Caco-2 (cell line): ENCODE measurements at regions of chr11 and their contacts with region 1.

Region 1: GRCh38 chr11:73141848-73142286 is 251 bp downstream of the FCHSD2 start:
- DNase-seq: peak; percentile 86 to 89
- H3K4me3 ChIP-seq: peak overlapping the region; percentile 96
- H3K4me3 Mint-ChIP-seq: peak overlapping the region; percentile 96
- H3K27ac Mint-ChIP-seq: peak overlapping the region; percentile 93
- H3K4me1 ChIP-seq: peaks cover 28% of the 10 kb centered on the region
- H3K4me1 Mint-ChIP-seq: peaks cover 24% of the 10 kb centered on the region
- H3K27me3 ChIP-seq: no peaks in the 10 kb centered on the region
- H3K27me3 Mint-ChIP-seq: no peaks in the 10 kb centered on the region
- CTCF ChIP-seq: peak in 1 of 2 experiments; percentile 20

Region 2: DNA sequence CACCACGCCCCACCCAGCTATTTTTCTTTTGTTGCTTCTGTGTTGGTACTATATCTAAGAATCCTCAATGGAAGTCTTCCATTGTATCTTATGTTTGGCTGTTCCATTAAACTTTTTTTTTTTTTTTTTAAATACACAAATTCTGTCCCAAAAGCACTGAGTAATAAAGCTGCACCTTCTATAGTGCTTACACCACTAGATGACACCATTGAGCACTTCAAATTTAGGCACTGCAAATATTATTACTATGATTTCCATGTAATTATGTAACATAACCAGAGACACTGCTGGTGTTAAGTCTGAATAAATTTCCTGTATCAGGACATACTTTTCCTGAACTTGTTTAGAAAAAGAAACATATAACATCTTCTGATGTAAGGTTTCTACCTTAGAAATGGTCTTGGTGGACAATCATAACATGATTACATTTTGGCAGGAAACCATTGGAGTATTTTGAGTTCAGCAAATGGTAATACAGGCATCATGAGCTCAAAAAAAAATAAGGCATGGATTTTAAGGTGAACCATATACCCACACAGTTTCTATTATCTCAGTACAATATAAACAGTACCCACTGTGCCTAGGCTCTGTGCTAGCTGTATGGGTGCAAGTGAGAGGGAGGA is 217.2 kb before region 1 on chr11:
- CTCF ChIA-PET with region 1: interaction called, 11 read pairs
- POLR2A ChIA-PET with region 1: interaction called, 6 read pairs
- intact Hi-C with region 1: loop called (anchors 5 kb)
- DNase-seq: peak in 1 of 2 experiments; percentile 40
- H3K4me3 ChIP-seq: no peak overlapping the region
- H3K4me3 Mint-ChIP-seq: no peak overlapping the region
- H3K27ac Mint-ChIP-seq: no peak overlapping the region
- H3K4me1 ChIP-seq: no peaks in the 10 kb centered on the region
- H3K4me1 Mint-ChIP-seq: no peaks in the 10 kb centered on the region
- H3K27me3 ChIP-seq: no peaks in the 10 kb centered on the region
- H3K27me3 Mint-ChIP-seq: no peaks in the 10 kb centered on the region
- CTCF ChIP-seq: peak; percentile 63 to 73

Region 3: GRCh38 chr11:72996959-72997358 is 144.9 kb before region 1 on chr11:
- CTCF ChIA-PET with region 1: no interaction called
- POLR2A ChIA-PET with region 1: no interaction called
- intact Hi-C with region 1: loop called (anchors 5 kb)
- DNase-seq: no peak
- H3K4me3 ChIP-seq: no peak overlapping the region
- H3K4me3 Mint-ChIP-seq: no peak overlapping the region
- H3K27ac Mint-ChIP-seq: no peak overlapping the region
- H3K4me1 ChIP-seq: peaks cover 12% of the 10 kb centered on the region
- H3K4me1 Mint-ChIP-seq: peaks cover 7% of the 10 kb centered on the region
- H3K27me3 ChIP-seq: no peaks in the 10 kb centered on the region
- H3K27me3 Mint-ChIP-seq: no peaks in the 10 kb centered on the region
- CTCF ChIP-seq: no peak

Region 4: GRCh38 chr11:73059915-73060314 is 82.0 kb before region 1 on chr11:
- CTCF ChIA-PET with region 1: interaction called, 6 read pairs
- POLR2A ChIA-PET with region 1: no interaction called
- intact Hi-C with region 1: loop called (anchors 2 kb)
- DNase-seq: no peak
- H3K4me3 ChIP-seq: no peak overlapping the region
- H3K4me3 Mint-ChIP-seq: no peak overlapping the region
- H3K27ac Mint-ChIP-seq: no peak overlapping the region
- H3K4me1 ChIP-seq: peaks cover 16% of the 10 kb centered on the region
- H3K4me1 Mint-ChIP-seq: peaks cover 22% of the 10 kb centered on the region
- H3K27me3 ChIP-seq: no peaks in the 10 kb centered on the region
- H3K27me3 Mint-ChIP-seq: no peaks in the 10 kb centered on the region
- CTCF ChIP-seq: no peak

Region 5: DNA sequence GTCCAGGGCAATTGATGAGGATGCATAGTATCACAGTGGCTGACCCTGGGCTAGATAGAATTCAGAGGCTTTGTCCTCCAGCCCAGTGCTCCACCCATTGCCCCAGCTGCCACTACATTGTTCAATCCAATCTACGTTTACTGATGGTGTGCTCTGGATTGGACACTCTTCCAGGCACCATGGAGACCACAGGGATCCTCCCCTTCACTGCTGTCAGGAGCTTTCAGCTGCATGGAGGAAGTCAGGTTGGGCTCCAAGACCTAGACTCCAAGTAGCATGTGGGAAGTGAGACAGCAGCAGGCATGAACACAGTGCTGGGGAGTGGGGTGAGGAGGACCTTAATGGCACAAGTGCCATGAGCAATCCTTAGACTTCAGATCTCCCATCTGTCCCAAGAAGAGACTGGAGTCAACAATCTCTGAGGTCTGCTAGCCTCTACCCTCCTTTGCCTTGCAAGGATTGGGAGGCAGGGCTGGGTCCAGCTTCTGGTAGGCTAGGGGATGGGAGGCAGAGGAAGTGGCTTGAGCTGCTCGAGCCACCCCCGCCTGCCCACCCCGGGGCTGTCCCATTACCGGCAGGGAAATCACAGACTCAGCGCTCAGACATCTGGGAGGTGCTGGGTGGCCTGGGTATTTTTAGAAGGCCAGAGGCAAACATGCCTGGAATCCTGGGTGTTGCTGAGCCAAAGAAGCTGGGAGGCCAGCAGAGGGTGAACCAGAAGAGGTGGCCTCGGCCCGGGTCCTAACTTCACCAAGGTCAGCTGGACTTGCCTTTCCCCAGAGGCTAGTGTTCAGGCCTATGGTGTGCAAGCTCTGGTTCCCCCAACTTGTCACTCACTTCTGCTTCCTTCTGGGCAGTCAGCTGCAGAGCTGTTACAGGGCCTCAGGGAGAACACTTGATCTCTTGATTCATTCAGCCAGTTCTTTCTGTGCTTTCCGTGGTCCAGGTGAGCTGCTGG is 15.5 kb after region 1 on chr11:
- CTCF ChIA-PET with region 1: interaction called, 15 read pairs
- POLR2A ChIA-PET with region 1: interaction called, 12 read pairs
- intact Hi-C with region 1: no loop called
- DNase-seq: peak in 1 of 2 experiments; percentile 69
- H3K4me3 ChIP-seq: no peak overlapping the region
- H3K4me3 Mint-ChIP-seq: no peak overlapping the region
- H3K27ac Mint-ChIP-seq: no peak overlapping the region
- H3K4me1 ChIP-seq: peaks cover 42% of the 10 kb centered on the region
- H3K4me1 Mint-ChIP-seq: peaks cover 27% of the 10 kb centered on the region
- H3K27me3 ChIP-seq: no peaks in the 10 kb centered on the region
- H3K27me3 Mint-ChIP-seq: no peaks in the 10 kb centered on the region
- CTCF ChIP-seq: no peak

Region 6: DNA sequence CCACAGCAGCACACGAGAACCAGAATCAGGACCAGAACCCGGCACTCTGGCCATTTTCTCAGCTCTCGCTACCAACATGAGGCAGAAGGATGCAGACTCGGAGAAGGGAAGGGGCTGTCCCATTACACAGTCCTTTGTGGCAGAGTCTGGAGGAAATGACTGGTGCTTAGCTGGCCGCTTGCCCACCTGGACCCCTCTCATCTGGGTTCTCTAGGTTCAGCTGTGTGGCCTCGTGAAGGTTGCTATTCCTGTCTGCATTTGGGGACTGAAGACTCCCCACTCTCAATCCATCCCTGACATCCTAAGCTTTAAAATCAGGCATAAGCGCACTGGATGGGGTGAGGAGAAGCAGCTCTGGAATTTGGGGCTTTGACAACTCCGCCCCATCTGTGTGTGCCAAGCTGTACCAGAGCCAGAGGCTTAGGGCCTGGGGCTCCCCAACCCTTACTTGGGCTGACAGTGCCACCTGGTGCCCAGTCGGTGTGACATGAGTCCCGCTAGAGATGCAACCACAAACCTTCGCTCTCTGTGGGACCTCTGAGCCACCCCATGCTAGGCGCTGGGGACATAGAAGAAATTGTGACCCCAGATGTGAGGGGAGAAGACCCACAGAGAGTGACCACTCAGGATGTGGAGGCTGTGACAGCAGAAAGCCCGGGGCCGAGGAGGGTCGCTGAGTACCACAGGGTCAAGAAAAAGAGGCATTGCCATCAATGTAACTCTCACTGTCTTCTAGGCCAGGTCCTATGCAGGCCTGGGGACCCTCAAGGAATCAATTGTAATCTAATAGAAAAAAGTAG is 36.1 kb after region 1 on chr11:
- CTCF ChIA-PET with region 1: interaction called, 34 read pairs
- POLR2A ChIA-PET with region 1: no interaction called
- intact Hi-C with region 1: loop called (anchors 2 kb)
- DNase-seq: peak; percentile 85 to 88
- H3K4me3 ChIP-seq: no peak overlapping the region
- H3K4me3 Mint-ChIP-seq: no peak overlapping the region
- H3K27ac Mint-ChIP-seq: no peak overlapping the region
- H3K4me1 ChIP-seq: peaks cover 30% of the 10 kb centered on the region
- H3K4me1 Mint-ChIP-seq: peaks cover 19% of the 10 kb centered on the region
- H3K27me3 ChIP-seq: no peaks in the 10 kb centered on the region
- H3K27me3 Mint-ChIP-seq: no peaks in the 10 kb centered on the region
- CTCF ChIP-seq: peak; percentile 93 to 96